ENCODE measurements at regions of chr1 and their contacts with region 1.

Region 1: DNA sequence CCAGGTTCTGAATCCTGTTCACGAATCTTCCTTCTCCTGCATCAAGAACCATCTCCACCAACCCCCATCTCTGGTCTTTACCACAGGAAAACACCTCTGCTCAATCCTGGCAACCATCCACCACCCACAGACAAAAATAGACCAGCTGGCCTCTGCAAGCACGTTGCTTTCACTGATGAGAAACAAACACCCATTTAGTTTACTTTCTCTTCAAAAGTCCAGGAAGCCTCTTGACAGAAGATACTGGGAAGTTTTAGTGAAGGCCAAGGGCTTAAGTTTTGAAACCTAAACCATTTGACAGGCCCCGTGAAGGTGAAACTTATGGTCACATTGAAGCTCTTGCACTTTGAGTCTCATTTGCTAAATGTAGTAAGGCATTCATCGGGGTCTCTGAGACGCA is 122.6 kb upstream of the PPP2R5A start:
- DNase-seq: peak in 1 of 2 donors; percentile 57
- ATAC-seq: peak; percentile 28 to 58 (median 48)
- H3K4me3 ChIP-seq: no peak overlapping the region
- H3K4me3 Mint-ChIP-seq: peak overlapping the region; percentile 25
- H3K27ac ChIP-seq: no peak overlapping the region
- H3K27ac Mint-ChIP-seq: peak overlapping the region in 1 of 2 donors; percentile 10
- H3K4me1 ChIP-seq: peaks cover 33% of the 10 kb centered on the region
- H3K4me1 Mint-ChIP-seq: peaks cover 10 to 27% of the 10 kb centered on the region in 2 donors
- H3K27me3 ChIP-seq: no peaks in the 10 kb centered on the region
- H3K27me3 Mint-ChIP-seq: peaks cover 0 to 3% of the 10 kb centered on the region in 2 donors
- CTCF ChIP-seq: no peak

Region 2: GRCh38 chr1:212205843-212206242 is 43.2 kb after region 1 on chr1:
- intact Hi-C with region 1: no loop called
- DNase-seq: no peak
- ATAC-seq: no peak
- H3K4me3 ChIP-seq: no peak overlapping the region
- H3K4me3 Mint-ChIP-seq: no peak overlapping the region
- H3K27ac ChIP-seq: no peak overlapping the region
- H3K27ac Mint-ChIP-seq: no peak overlapping the region
- H3K4me1 ChIP-seq: no peaks in the 10 kb centered on the region
- H3K4me1 Mint-ChIP-seq: peaks cover 5 to 6% of the 10 kb centered on the region in 2 donors
- H3K27me3 ChIP-seq: no peaks in the 10 kb centered on the region
- H3K27me3 Mint-ChIP-seq: no peaks in the 10 kb centered on the region
- CTCF ChIP-seq: no peak

Region 3: GRCh38 chr1:212256369-212256768 is 93.7 kb after region 1 on chr1:
- intact Hi-C with region 1: loop called (anchors 10 kb)
- DNase-seq: peak in 1 of 2 donors; percentile 73
- ATAC-seq: peak; percentile 63 to 78 (median 77)
- H3K4me3 ChIP-seq: no peak overlapping the region
- H3K4me3 Mint-ChIP-seq: peak overlapping the region; percentile 51
- H3K27ac ChIP-seq: peak overlapping the region; percentile 75
- H3K27ac Mint-ChIP-seq: peak overlapping the region; percentile 83 to 88
- H3K4me1 ChIP-seq: peaks cover 51% of the 10 kb centered on the region
- H3K4me1 Mint-ChIP-seq: peaks cover 52 to 87% of the 10 kb centered on the region in 2 donors
- H3K27me3 ChIP-seq: no peaks in the 10 kb centered on the region
- H3K27me3 Mint-ChIP-seq: no peaks in the 10 kb centered on the region
- CTCF ChIP-seq: no peak